HepG2 (cell line): ENCODE measurements at regions of chr2 and their contacts with region 1.

Region 1: DNA sequence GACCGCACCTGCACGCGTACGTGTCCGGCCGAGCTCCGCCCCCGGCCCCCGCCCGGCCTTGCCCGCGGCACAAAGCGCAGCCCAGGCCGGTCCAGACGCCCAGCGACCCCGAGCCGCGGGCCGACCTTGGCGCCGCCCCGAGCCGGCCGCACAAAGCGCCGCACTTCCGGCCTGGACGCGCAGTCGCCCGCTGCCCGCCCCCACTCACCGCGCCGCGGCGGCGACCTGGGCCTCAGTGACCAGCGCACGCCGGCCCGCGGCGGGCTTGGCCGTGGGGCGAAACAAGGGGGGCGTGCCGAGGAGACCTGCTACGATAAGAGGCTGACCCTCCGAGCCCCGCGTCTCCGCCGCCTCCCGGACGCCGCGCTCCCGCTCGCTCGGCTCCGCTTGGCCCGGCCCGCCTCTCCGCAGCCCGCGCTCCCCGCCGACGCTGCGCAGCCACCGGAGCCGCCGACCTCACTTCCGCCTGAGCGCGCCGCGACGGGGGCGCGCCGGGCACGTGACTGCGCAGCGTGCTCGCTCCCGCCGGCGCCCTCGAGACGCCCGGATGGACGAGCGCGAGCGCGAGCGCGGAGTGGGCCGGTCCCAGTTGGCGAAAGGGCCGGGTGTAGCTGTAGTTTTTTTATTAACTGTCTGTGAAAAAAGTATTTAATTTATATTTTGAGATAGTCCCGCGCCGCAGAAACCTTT is at the start of gene FAM168B:
- DNase-seq: peak; percentile 82
- ATAC-seq: peak; percentile 90
- H3K4me3 ChIP-seq: peak within 1 kb of the TSS; percentile 68 to 90 (median 79)
- H3K27ac ChIP-seq: peak within 1 kb of the TSS; percentile 97
- H3K4me1 ChIP-seq: peaks cover 36% of the 10 kb centered on the region
- H3K27me3 ChIP-seq: no peaks in the 10 kb centered on the region; a peak in 1 of 5 replicates
- CTCF ChIP-seq: no peak
- EP300 ChIP-seq: peak; percentile 12 to 54; a peak in 1 of 4 replicates
- POLR2A ChIP-seq: peak; percentile 81 to 86
- RAD21 ChIP-seq: peak; percentile 87
- total RNA-seq, gene FAM168B: 63.7 and 64.5 TPM in 2 replicates

Region 2: GRCh38 chr2:131076707-131077106 is 16.4 kb before region 1 on chr2:
- CTCF ChIA-PET with region 1: no interaction called
- POLR2A ChIA-PET with region 1: interaction called, 17 read pairs
- in situ Hi-C with region 1: no loop called
- intact Hi-C with region 1: no loop called
- DNase-seq: peak; percentile 57
- ATAC-seq: peak; percentile 84
- H3K4me3 ChIP-seq: no peak overlapping the region
- H3K27ac ChIP-seq: peak overlapping the region; percentile 36
- H3K4me1 ChIP-seq: peaks cover 33% of the 10 kb centered on the region
- H3K27me3 ChIP-seq: no peaks in the 10 kb centered on the region
- CTCF ChIP-seq: no peak
- EP300 ChIP-seq: no peak
- POLR2A ChIP-seq: no peak
- RAD21 ChIP-seq: no peak

Region 3: GRCh38 chr2:131105156-131105949 is 12.2 kb after region 1 on chr2 and contains the start of gene PLEKHB2:
- CTCF ChIA-PET with region 1: no interaction called
- POLR2A ChIA-PET with region 1: interaction called, 132 read pairs
- in situ Hi-C with region 1: no loop called
- intact Hi-C with region 1: loop called (anchors 1 kb)
- DNase-seq: peak; percentile 84
- ATAC-seq: peak; percentile 67
- H3K4me3 ChIP-seq: peak within 1 kb of the TSS; percentile 89 to 100 (median 100)
- H3K27ac ChIP-seq: peak within 1 kb of the TSS; percentile 74
- H3K4me1 ChIP-seq: peaks cover 74% of the 10 kb centered on the region
- H3K27me3 ChIP-seq: no peaks in the 10 kb centered on the region; a peak in 1 of 5 replicates
- CTCF ChIP-seq: peak; percentile 61
- EP300 ChIP-seq: no peak
- POLR2A ChIP-seq: peak; percentile 88 to 99
- RAD21 ChIP-seq: no peak
- total RNA-seq, gene PLEKHB2: 78.9 and 110 TPM in 2 replicates